ENCODE measurements at regions of chr13 and their contacts with region 1.

Region 1: GRCh38 chr13:101514788-101515187 is 62.3 kb downstream of the ITGBL1 start:
- DNase-seq: peak; percentile 68
- H3K4me3 ChIP-seq: no peak overlapping the region
- H3K27ac ChIP-seq: no peak overlapping the region
- H3K4me1 ChIP-seq: peaks cover 36% of the 10 kb centered on the region
- H3K27me3 ChIP-seq: no peaks in the 10 kb centered on the region
- CTCF ChIP-seq: peak; percentile 85

Region 2: GRCh38 chr13:101757446-101758039 is 242.8 kb after region 1 on chr13:
- CTCF ChIA-PET with region 1: no interaction called
- POLR2A ChIA-PET with region 1: no interaction called
- intact Hi-C with region 1: loop called (anchors 1 kb)
- DNase-seq: peak; percentile 69
- H3K4me3 ChIP-seq: no peak overlapping the region
- H3K27ac ChIP-seq: no peak overlapping the region
- H3K4me1 ChIP-seq: no peaks in the 10 kb centered on the region
- H3K27me3 ChIP-seq: no peaks in the 10 kb centered on the region
- CTCF ChIP-seq: peak; percentile 70

Region 3: GRCh38 chr13:101916108-101916757 is 401.4 kb after region 1 on chr13:
- CTCF ChIA-PET with region 1: no interaction called
- POLR2A ChIA-PET with region 1: no interaction called
- intact Hi-C with region 1: loop called (anchors 10 kb)
- DNase-seq: peak; percentile 61
- H3K4me3 ChIP-seq: peak overlapping the region; percentile 49
- H3K27ac ChIP-seq: no peak overlapping the region
- H3K4me1 ChIP-seq: peaks cover 13% of the 10 kb centered on the region
- H3K27me3 ChIP-seq: peaks cover 55% of the 10 kb centered on the region
- CTCF ChIP-seq: peak; percentile 60

Measured in A673 (cell line).